Cardiac septum (tissue), 1 donor: ENCODE measurements at regions of chr12 and their contacts with region 1.

Region 1: GRCh38 chr12:40054554-40055227 is 51.2 kb downstream of the SLC2A13 start:
- DNase-seq: no peak

Region 2: DNA sequence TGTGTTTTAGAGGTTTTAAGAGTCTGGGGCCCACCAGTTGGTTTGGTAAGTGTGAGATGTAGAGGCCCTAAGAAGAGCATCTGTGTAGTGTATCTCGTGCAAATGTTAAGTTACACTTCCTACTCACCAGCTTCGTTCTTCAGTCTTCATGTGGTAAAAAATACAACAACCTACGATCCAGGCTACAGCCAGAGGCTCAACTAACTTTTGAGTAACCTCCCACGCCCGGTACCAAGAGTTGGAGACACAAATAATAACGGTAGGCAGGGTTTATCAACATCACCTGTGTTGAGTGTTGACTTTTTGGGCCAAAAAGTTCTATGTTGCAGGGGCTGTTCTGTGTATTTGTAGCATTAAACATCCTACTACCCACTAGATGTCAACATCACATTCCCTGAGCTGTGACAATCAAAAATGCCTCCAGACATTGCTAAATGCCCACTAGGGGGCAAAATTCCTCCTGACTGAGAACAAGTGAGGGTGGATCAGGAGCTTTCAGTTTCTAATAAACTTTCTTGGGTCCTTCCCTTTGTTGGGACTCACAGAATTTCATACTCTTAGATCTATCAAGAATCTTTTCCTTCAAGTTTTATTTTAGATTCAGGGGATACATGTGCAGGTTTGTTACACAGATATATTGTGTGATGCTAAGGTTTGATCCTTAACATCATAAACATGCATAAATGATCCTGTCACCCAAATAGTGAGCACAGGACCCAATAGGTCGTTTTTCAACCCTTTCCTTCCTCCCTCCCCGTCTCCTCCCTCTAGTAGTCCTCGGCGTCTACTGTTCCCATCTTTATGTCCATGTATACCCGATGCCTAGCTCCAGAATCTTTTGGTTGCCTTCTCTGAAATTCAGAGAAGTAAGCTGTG is 43.6 kb before region 1 on chr12:
- intact Hi-C with region 1: loop called (anchors 5 kb)
- DNase-seq: no peak

Region 3: DNA sequence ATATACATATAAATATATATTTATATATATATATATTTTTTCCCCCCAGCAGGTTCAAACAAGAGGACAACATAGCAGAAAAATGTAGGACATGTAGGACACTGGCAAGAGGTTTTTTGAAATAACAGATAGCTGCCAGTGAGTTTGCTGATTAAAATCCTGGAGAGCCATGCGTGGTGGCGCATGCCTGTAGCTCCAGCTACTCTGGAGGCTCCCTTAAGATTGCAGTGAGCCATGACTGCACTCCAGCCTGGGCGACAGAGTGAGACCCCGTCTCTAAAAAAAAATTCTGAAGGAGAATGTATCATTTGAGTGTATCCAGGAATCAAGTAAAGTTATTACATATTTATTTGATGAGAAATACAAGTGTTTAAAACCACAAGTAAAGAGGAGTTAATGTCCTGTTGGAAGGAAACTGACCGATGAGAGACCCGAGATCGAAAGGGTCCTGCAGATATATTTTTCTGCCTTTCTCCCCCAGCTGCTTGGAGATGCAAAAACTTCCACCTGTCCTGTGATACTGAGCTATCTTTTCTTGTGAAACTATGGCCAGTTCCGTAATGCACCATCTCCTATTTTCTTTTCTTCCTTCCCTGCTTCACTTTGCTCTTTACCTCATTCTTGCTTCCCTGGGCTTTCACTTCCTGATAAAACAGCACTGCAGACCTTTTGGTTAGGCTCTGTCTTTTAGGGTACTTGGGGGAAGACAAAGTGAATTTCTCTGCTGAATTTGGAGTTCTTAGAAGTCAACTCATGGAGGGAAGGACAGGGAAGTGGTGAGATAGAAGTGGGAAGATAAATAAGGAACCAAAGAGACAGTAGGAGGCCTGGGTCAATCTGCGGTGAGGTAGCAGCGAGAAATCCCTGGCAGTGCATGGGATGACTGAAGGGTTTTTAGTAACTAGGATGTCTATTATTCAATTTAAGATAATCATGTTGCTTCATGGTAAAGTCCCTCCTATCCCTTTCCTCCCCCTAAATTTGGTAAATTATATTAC is 92.4 kb after region 1 on chr12:
- intact Hi-C with region 1: no loop called
- DNase-seq: no peak